ENCODE measurements at regions of chr1 and their contacts with region 1.

Region 1: DNA sequence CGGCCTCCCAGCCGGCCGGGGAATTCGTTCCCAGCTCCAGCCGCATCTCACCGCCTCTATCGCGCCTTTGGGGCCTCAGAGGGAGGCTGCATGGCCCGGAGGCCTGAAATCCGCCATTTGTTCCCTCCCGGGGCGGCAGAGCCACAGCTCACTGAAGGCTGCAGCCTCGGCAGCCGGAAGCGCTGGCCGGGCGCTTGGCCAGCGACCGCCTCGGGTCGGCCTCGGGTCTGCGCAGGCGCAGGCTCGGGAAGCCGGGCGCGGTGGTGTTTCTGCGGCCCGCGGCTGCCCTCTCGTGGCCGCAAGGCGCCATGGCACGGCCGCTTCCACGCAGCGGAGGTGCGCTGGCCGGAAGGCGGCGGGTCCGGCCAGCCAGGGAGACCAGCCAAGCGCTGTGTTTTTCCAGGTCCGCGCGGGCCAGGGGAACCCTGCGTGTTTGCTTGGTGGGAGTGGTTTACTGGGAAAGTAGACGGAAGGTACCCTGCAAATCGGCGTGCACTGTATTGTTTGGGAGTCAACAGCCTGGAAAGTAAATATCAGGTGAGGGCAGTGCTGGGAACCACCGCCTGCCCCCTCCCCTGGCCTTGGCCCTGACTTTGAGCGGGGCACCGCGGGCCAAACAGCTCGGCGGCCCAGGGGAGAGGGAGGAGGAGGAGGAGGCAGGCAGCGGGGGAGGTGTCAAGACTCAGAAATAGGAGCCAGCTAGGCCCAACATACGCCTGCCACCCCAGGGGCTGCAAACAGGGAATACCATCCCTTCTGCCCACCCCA is 52.7 kb upstream of the CD34 start:
- DNase-seq: peak; percentile 95

Region 2: DNA sequence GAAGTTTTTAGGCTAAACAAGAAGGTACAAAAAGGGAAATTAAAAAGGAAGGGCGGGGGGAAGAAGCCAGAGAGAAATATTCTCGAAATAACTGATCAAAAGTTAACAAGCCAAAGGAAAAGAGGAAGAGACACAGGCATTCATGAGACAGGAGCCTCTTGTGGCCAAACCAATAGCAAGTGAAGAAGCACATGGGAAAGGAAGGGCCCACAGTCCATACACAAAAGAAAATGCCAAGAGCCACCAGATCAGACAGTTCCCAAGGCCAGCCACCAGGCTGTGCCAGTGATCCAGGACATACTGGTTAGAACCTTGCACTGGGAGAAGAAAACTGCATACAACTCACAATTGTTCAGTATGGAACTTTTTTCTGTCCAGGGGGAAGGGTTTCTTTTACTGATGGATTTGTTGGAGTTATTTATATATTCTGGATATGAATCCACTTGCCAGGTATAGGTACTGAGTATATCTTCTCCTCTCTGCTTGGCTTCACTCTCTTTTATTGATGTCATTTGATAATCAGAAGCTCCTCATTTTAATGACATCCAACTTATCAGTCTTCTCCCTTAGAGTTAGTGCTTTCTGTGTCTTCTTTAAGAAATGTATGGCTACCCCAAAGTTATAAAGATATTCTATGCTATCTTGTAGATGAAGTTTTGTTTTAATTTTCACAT is 135.0 kb before region 1 on chr1:
- intact Hi-C with region 1: loop called (anchors 5 kb)
- DNase-seq: peak; percentile 87

Region 3: DNA sequence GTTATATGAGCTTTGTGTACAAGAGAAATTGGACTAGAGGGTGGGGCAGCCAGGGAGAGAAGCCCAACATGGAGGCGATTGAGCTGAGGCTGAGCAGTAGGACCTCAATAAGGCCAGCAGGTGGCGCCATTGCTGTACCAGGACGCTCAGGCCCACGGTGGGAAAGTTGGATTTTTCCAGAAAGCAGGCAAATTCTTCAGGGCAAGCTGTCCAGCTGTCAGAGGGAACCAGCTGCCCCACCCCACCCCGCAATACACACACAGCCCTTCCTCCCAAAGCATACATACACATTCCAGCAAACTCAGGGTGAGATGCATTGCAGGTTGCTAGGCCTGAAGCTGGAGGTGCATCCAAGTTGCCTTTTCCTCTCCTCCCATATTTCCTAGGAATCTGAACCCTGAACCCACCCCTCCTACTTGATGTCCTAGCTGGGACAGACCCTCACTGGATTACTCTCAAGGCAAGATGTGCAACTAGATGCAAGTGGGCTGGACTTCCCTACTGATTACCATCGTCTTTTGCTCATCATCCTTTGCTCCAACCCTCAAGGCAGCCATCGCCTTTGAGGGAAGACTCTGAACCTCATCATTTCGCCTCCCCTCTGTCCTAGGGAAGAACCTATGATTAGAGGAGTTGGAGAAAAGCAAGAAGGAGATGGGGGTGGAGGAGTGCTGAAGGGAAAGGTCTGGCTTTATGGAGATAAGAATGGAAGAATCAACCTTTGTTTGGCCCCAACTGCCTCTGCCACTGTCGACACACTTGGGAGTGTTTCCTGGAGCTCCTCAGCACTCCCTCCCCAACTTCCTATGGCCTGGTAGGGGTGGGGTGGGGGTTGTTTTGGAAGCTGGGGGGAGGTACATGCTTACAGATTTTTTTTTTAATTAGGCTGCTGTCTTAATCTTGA is 78.2 kb before region 1 on chr1:
- intact Hi-C with region 1: loop called (anchors 1 kb)
- DNase-seq: peak; percentile 93

Region 4: DNA sequence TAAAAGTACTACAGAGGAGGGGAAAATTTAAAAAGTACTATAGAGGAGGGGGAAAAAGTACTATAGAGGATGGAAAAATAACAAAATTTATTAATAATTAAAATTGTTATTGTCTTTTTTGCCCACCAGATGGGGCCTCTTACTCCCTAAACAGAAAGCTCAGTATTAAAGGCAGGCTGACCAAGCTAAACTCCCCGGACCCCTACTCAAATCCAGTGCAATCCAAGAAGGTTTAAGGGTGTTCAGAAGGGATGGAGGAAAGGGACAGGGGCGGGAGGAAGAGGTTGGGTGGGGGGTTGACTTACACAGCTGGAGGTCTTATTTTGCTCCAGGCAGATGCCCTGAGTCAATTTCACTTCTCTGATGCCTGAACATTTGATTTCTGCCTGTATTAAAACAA is 66.4 kb before region 1 on chr1:
- intact Hi-C with region 1: loop called (anchors 1 kb)
- DNase-seq: no peak

Region 5: DNA sequence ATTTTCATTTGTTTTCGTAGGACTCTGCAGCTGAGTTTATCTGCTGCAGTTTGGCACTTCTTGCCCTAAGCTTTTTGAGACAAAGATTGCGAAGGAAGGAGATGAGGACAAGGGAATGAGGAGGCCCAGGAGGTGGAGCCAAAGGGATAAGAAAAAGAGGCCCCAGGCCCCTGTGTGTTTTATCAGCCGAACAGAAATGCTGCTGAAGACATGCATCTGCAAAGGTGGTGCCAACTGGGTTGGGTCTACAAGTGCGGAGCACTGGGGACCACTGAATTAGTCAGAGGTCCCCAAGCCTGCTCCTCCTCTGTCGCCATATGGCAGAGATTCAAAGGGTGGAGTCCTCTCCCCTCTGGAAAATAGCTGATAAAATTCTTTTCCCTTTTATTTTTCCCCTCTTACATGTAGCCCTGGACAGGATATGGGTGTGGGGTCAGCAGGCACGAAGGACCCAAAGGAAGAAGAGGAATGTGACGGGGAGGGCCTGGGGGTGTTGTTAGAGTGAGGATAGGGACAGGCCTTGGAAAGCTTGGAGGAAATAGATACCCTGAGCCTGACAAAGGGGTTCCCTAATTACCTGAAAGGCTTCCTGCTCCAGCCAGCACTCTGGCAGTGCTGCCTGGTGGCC is 55.4 kb before region 1 on chr1:
- intact Hi-C with region 1: loop called (anchors 2 kb)
- DNase-seq: no peak

Region 6: DNA sequence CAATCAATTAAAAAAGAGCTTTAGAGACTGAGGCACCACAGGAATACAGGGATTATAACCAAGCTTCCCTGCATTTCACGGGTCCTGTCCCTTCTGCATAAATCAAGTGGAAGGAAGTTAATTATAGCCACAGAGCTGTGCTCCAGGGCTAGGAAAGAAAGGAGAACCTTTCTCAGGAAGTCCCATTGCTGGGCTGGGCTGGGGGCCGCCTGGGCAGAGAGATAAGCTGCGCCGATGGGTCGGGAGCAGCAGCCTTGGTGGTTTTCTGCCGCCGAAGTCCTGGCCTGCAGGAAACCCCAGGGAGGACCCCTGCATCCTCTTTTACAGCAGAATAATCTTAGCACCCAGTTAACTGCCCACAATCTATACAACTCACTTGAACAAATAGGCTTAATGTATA is 40.0 kb before region 1 on chr1:
- intact Hi-C with region 1: loop called (anchors 2 kb)
- DNase-seq: no peak